ENCODE measurements at regions of chr16 and their contacts with region 1.

Region 1: DNA sequence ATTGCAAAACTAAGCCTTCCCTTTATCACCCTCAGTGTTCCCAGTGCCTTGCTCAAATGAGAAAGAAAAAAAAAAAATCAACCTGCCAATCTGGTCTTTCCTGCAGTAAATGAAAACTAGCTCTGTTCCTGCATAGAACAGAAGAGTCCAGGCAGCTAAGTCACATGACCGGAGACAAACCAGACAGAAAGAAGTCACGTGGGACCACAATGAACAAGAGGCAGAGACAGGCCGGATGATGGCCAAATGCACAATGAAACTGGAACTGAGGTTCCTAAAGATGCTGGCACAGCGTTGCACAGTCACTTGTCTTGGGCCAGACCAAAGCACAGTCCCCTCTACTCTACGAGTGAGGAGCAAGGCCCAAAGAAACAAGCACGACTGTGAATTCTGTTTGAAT is 172.5 kb downstream of the GRIN2A start:
- DNase-seq: no peak
- H3K4me3 ChIP-seq: no peak overlapping the region
- H3K27ac ChIP-seq: no peak overlapping the region
- H3K4me1 ChIP-seq: no peaks in the 10 kb centered on the region
- H3K27me3 ChIP-seq: no peaks in the 10 kb centered on the region
- CTCF ChIP-seq: no peak
- EP300 ChIP-seq: no peak
- POLR2A ChIP-seq: no peak

Region 2: DNA sequence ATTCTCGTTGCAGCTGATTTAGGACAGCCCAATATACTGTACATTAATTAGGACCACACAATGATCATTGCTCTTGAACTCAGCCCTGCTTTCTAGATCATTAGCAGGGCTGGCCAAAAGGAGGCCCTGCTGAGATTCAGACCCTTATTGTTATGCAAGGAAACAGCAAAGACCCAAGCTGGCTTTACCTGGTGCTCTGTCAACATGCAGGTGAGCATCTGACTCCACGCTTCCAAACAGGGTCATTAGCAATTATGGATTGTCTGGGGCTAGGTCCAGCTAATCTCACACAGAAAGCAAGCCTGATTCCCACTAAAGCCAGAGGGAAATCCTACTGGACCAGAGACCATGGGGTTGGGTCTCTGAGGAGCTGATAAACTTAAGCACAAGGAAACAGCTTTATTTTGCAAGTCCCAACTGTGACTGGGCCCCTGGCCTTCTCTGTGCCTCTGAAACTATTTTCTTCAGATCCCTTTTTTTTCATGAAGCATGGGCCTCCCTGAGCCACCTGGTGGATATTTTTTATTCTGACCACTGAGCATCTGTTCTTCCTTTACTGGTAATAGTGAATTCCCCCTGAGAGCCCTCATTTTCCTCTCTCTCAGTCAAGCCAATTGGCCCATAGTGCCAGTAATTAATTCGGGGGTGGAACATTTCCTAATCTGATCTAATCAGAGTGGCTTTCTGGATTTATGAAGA is 63.5 kb before region 1 on chr16:
- intact Hi-C with region 1: loop called (anchors 10 kb)
- DNase-seq: no peak
- H3K4me3 ChIP-seq: no peak overlapping the region
- H3K27ac ChIP-seq: no peak overlapping the region
- H3K4me1 ChIP-seq: no peaks in the 10 kb centered on the region
- H3K27me3 ChIP-seq: no peaks in the 10 kb centered on the region
- CTCF ChIP-seq: no peak
- EP300 ChIP-seq: no peak
- POLR2A ChIP-seq: no peak

Region 3: GRCh38 chr16:10338426-10338825 is 328.7 kb after region 1 on chr16:
- intact Hi-C with region 1: no loop called
- DNase-seq: no peak
- H3K4me3 ChIP-seq: no peak overlapping the region
- H3K27ac ChIP-seq: no peak overlapping the region
- H3K4me1 ChIP-seq: peaks cover 0 to 7% (median 2%) of the 10 kb centered on the region in 4 donors
- H3K27me3 ChIP-seq: no peaks in the 10 kb centered on the region
- CTCF ChIP-seq: no peak
- EP300 ChIP-seq: no peak
- POLR2A ChIP-seq: no peak